IMR-90 (cell line): ENCODE measurements at regions of chr7 and their contacts with region 1.

Region 1: GRCh38 chr7:47866120-47866519 is 82.1 kb downstream of the PKD1L1 start:
- DNase-seq: peak; percentile 50
- ATAC-seq: peak; percentile 42
- H3K4me3 ChIP-seq: no peak overlapping the region
- H3K27ac ChIP-seq: no peak overlapping the region
- H3K4me1 ChIP-seq: no peaks in the 10 kb centered on the region
- H3K27me3 ChIP-seq: peaks cover 11% of the 10 kb centered on the region
- CTCF ChIP-seq: no peak
- POLR2A ChIP-seq: no peak
- RAD21 ChIP-seq: no peak

Region 2: DNA sequence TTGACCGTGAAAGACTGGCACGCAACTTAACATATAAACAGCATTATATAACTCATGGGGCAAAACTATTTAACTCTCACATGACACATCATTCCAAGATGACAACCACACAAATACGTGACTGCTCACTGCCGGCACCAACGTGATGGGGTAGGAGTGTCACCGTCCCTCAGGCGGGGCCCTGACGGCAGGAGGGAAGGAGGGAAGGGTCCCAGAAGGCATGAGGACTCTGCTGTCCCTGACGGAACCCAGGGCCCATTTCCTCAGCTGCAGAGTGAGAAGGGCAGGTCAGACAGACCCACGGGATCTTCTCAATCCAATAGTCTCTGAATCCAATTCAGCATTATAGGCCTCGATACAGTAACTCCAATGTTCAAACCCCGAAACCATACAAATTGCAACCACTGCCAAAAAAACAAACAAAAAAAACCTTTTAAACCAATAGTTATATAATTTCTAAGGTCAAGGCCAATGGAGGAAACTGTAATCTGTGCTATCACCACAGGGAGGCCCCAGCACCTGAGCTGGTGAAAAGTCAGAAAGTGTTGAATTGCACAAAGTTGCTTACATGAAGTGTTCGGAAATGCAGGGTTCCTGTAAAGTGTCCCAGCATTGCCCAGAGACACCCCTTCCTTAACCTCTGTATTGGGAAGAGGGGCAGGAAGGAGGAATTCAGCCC is 421.6 kb before region 1 on chr7:
- CTCF ChIA-PET with region 1: no interaction called
- POLR2A ChIA-PET with region 1: no interaction called
- dilution Hi-C with region 1: no loop called
- in situ Hi-C with region 1: no loop called
- intact Hi-C with region 1: no loop called
- DNase-seq: no peak
- ATAC-seq: 0 out of 2 replicates have a peak, but pooled peaks have one; percentile 31
- H3K4me3 ChIP-seq: no peak overlapping the region
- H3K27ac ChIP-seq: no peak overlapping the region
- H3K4me1 ChIP-seq: peaks cover 12% of the 10 kb centered on the region
- H3K27me3 ChIP-seq: no peaks in the 10 kb centered on the region
- CTCF ChIP-seq: peak; percentile 47
- POLR2A ChIP-seq: no peak
- RAD21 ChIP-seq: peak; percentile 58

Region 3: DNA sequence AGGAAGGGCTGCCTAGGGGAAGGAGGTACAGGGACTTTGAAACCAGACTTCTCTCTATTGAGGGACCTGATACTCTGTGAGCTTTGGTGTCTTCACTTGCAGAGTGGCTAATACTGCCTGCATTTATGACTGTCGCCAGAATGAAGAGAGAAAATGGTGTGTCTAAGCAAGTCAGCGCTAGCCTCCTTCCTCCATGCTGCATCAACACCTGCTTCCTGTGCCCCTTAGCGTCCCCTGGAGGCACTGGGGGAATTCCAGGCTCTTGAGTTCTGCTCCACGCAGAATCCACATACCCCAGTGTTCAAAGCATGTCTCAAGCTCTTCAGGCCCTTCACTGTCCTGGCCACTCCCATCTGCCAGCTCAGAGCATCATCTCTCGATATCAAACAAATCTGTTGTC is 58.4 kb before region 1 on chr7:
- CTCF ChIA-PET with region 1: no interaction called
- POLR2A ChIA-PET with region 1: no interaction called
- dilution Hi-C with region 1: no loop called
- in situ Hi-C with region 1: no loop called
- intact Hi-C with region 1: no loop called
- DNase-seq: no peak
- ATAC-seq: no peak
- H3K4me3 ChIP-seq: no peak overlapping the region
- H3K27ac ChIP-seq: no peak overlapping the region
- H3K4me1 ChIP-seq: peaks cover 9% of the 10 kb centered on the region
- H3K27me3 ChIP-seq: no peaks in the 10 kb centered on the region; the same call in 1 of the 2 replicates
- CTCF ChIP-seq: no peak
- POLR2A ChIP-seq: no peak
- RAD21 ChIP-seq: no peak

Region 4: DNA sequence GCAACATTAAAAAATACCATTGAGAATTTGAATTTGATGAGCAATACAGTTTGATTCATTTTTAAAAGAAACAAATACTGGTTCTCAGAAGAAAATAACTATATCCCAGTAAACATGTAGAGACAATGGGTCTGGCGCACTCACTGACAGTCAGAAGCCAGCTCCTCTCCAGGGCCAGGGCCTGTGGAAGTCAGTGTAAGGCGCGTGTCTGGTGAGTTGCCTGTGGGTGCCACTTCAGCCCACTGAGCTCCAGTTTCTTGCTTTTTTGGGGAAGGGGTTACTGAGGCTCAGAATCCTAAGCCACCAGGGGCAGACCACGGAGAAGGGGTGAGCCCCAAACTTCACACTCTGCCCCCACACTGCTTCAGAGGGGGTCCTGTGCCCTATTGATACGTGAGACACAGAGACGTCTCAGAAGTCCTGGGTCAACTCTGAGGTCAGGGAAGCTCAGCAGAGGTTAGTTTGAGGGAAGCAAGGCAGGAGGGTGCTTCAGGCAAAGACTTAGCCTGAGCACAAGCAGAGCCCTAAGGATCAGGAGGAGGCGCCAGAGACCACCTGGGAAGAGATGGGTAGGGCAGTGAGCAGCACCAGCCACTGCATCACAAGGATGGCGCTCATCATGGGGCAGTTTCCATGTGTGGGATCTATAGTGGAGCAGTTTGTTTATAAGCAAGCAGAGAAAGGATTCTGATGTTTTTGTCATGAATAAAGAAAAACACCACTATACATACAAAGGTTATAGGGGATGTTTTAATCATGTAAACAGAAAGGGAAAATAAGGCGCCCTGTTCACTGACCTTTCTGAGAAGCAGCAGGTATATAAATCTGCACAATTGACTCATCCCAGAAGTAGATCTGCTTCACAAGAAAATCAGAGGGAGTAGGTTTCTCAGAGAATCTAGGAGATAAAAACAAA is 13.5 kb before region 1 on chr7:
- CTCF ChIA-PET with region 1: no interaction called
- POLR2A ChIA-PET with region 1: no interaction called
- dilution Hi-C with region 1: no loop called
- in situ Hi-C with region 1: no loop called
- intact Hi-C with region 1: loop called (anchors 1 kb)
- DNase-seq: no peak
- ATAC-seq: no peak
- H3K4me3 ChIP-seq: no peak overlapping the region
- H3K27ac ChIP-seq: no peak overlapping the region
- H3K4me1 ChIP-seq: no peaks in the 10 kb centered on the region
- H3K27me3 ChIP-seq: peaks cover 6% of the 10 kb centered on the region; the same call in 1 of the 2 replicates
- CTCF ChIP-seq: 0 out of 2 replicates have a peak, but pooled peaks have one; percentile 5
- POLR2A ChIP-seq: no peak
- RAD21 ChIP-seq: no peak